ENCODE measurements at regions of chr6 and their contacts with region 1.

Region 1: DNA sequence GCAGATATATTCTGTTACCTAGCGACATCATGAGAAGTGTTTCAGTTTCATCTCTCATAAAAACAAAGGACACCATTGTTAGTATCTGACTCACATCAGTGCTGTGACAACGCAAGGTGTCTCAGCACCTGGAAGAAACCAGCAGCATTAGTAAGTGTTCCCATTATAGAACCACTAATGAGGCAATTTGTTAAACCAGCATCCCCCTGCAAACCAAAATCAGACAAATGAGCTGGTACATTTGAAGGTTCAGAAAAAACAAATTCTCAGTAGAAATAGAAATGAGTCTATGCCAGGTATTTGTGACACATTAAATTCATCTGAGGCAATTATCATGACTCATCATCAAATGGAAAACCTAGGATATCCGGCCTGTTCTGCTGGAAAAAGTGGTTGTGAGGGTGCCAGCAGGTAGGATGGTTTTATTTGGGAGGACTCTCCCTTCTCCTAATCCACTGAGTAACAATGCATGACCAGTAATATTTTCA is 151.7 kb downstream of the TMEM200A start:
- DNase-seq: peak; percentile 54
- ATAC-seq: peak; percentile 66
- H3K4me3 Mint-ChIP-seq: no peak overlapping the region
- H3K27ac Mint-ChIP-seq: peak overlapping the region; percentile 90
- H3K4me1 Mint-ChIP-seq: peaks cover 58% of the 10 kb centered on the region
- H3K27me3 Mint-ChIP-seq: no peaks in the 10 kb centered on the region
- CTCF ChIP-seq: no peak

Region 2: GRCh38 chr6:130426066-130426721 is 91.3 kb before region 1 on chr6:
- CTCF ChIA-PET with region 1: no interaction called
- POLR2A ChIA-PET with region 1: no interaction called
- intact Hi-C with region 1: no loop called
- DNase-seq: no peak
- ATAC-seq: no peak
- H3K4me3 Mint-ChIP-seq: no peak overlapping the region
- H3K27ac Mint-ChIP-seq: no peak overlapping the region
- H3K4me1 Mint-ChIP-seq: no peaks in the 10 kb centered on the region
- H3K27me3 Mint-ChIP-seq: no peaks in the 10 kb centered on the region
- CTCF ChIP-seq: no peak

Region 3: GRCh38 chr6:130575971-130576370 is 58.5 kb after region 1 on chr6:
- CTCF ChIA-PET with region 1: interaction called, 4 read pairs
- POLR2A ChIA-PET with region 1: no interaction called
- intact Hi-C with region 1: loop called (anchors 5 kb)
- DNase-seq: peak; percentile 83
- ATAC-seq: peak; percentile 90
- H3K4me3 Mint-ChIP-seq: peak overlapping the region; percentile 16
- H3K27ac Mint-ChIP-seq: peak overlapping the region; percentile 72
- H3K4me1 Mint-ChIP-seq: peaks cover 31% of the 10 kb centered on the region
- H3K27me3 Mint-ChIP-seq: no peaks in the 10 kb centered on the region
- CTCF ChIP-seq: no peak